Panc1 (cell line): ENCODE measurements at regions of chr4 and their contacts with region 1.

Region 1: DNA sequence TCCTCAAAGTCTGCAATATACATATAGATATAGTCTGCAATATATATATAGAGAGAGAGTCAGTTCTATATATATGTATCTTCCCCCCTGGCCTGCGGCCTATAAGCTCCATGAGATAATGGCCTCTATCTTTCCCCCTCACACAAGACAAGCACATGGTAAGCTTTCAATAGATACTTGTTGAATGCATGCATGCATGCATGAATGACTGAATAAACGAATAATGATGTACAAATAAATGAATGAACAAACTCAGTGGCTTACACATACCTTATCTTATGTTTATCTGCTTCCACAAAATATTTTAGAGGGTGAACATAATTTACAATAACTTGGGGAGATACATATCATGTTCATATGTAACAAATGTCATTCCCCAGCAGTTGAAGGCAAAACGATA is 6.3 kb upstream of the GPM6A start:
- DNase-seq: no peak
- ATAC-seq: no peak
- H3K4me3 ChIP-seq: no peak overlapping the region
- H3K27ac ChIP-seq: no peak overlapping the region
- H3K4me1 ChIP-seq: no peaks in the 10 kb centered on the region
- H3K27me3 ChIP-seq: no peaks in the 10 kb centered on the region
- CTCF ChIP-seq: no peak

Region 2: GRCh38 chr4:175671491-175671934 is 146.9 kb before region 1 on chr4:
- CTCF ChIA-PET with region 1: no interaction called
- POLR2A ChIA-PET with region 1: interaction called, 12 read pairs
- in situ Hi-C with region 1: no loop called
- intact Hi-C with region 1: no loop called
- DNase-seq: no peak
- ATAC-seq: peak; percentile 53; the same call in 1 of the 2 replicates
- H3K4me3 ChIP-seq: peak overlapping the region; percentile 30 to 53
- H3K27ac ChIP-seq: no peak overlapping the region
- H3K4me1 ChIP-seq: no peaks in the 10 kb centered on the region
- H3K27me3 ChIP-seq: no peaks in the 10 kb centered on the region
- CTCF ChIP-seq: no peak